Tibial artery (tissue), 4 donors: ENCODE measurements at regions of chr11 and their contacts with region 1.

Region 1: GRCh38 chr11:84524422-84525051 is 1102.6 kb downstream of the DLG2 start:
- DNase-seq: no peak
- H3K4me3 ChIP-seq: no peak overlapping the region
- H3K27ac ChIP-seq: peak overlapping the region in 1 of 2 donors; percentile 48
- H3K4me1 ChIP-seq: peaks cover 0 to 20% (median 0%) of the 10 kb centered on the region in 4 donors
- H3K27me3 ChIP-seq: no peaks in the 10 kb centered on the region
- CTCF ChIP-seq: peak; percentile 59 to 73

Region 2: GRCh38 chr11:83836883-83837654 is 687.5 kb before region 1 on chr11:
- intact Hi-C with region 1: loop called (anchors 10 kb)
- DNase-seq: peak in 1 of 2 donors; percentile 25
- H3K4me3 ChIP-seq: no peak overlapping the region
- H3K27ac ChIP-seq: no peak overlapping the region
- H3K4me1 ChIP-seq: peaks cover 0 to 6% (median 0%) of the 10 kb centered on the region in 4 donors
- H3K27me3 ChIP-seq: no peaks in the 10 kb centered on the region
- CTCF ChIP-seq: peak; percentile 56 to 69

Region 3: GRCh38 chr11:84273541-84273940 is 251.0 kb before region 1 on chr11:
- intact Hi-C with region 1: no loop called
- DNase-seq: no peak
- H3K4me3 ChIP-seq: no peak overlapping the region
- H3K27ac ChIP-seq: no peak overlapping the region
- H3K4me1 ChIP-seq: no peaks in the 10 kb centered on the region
- H3K27me3 ChIP-seq: no peaks in the 10 kb centered on the region
- CTCF ChIP-seq: no peak

Region 4: GRCh38 chr11:84358034-84358433 is 166.5 kb before region 1 on chr11:
- intact Hi-C with region 1: no loop called
- DNase-seq: no peak
- H3K4me3 ChIP-seq: no peak overlapping the region
- H3K27ac ChIP-seq: no peak overlapping the region
- H3K4me1 ChIP-seq: no peaks in the 10 kb centered on the region
- H3K27me3 ChIP-seq: no peaks in the 10 kb centered on the region
- CTCF ChIP-seq: no peak

Region 5: GRCh38 chr11:84398017-84398626 is 126.4 kb before region 1 on chr11:
- intact Hi-C with region 1: loop called (anchors 10 kb)
- DNase-seq: no peak
- H3K4me3 ChIP-seq: no peak overlapping the region
- H3K27ac ChIP-seq: no peak overlapping the region
- H3K4me1 ChIP-seq: no peaks in the 10 kb centered on the region
- H3K27me3 ChIP-seq: no peaks in the 10 kb centered on the region
- CTCF ChIP-seq: no peak

Region 6: GRCh38 chr11:84455691-84456090 is 68.8 kb before region 1 on chr11:
- intact Hi-C with region 1: no loop called
- DNase-seq: no peak
- H3K4me3 ChIP-seq: no peak overlapping the region
- H3K27ac ChIP-seq: no peak overlapping the region
- H3K4me1 ChIP-seq: peaks cover 0 to 3% (median under 1%) of the 10 kb centered on the region in 4 donors
- H3K27me3 ChIP-seq: no peaks in the 10 kb centered on the region
- CTCF ChIP-seq: no peak